Mammary epithelial cell (primary cell): ENCODE measurements at regions of chr12 and their contacts with region 1.

Region 1: DNA sequence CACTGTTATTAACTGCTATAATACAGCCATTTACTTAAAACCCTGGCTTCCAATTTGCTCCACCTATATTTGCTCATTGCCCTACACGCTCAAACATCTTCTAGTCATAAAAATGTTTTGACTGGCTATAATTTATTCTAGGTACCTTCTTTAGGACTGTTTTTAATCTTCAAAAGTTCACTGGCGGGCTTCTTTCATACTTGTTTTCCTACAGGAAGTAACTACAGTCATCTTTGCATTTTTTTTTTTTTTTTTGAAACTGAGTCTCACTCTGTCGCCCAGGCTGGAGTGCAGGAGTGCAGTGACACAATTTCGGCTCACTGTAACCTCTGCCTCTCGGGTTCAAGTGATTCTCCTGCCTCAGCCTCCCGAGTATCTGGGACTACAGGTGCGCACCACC is 32.5 kb downstream of the MPHOSPH9 start:
- DNase-seq: no peak
- H3K4me3 ChIP-seq: no peak overlapping the region
- H3K27ac ChIP-seq: no peak overlapping the region
- H3K4me1 ChIP-seq: no peaks in the 10 kb centered on the region
- H3K27me3 ChIP-seq: no peaks in the 10 kb centered on the region
- CTCF ChIP-seq: no peak

Region 2: GRCh38 chr12:122437656-122438121 is 762.7 kb before region 1 on chr12:
- CTCF ChIA-PET with region 1: no interaction called
- dilution Hi-C with region 1: no loop called
- in situ Hi-C with region 1: no loop called
- intact Hi-C with region 1: no loop called
- DNase-seq: peak; percentile 74
- H3K4me3 ChIP-seq: peak overlapping the region in 1 of 3 experiments; percentile 3
- H3K27ac ChIP-seq: no peak overlapping the region
- H3K4me1 ChIP-seq: peaks cover 4% of the 10 kb centered on the region
- H3K27me3 ChIP-seq: no peaks in the 10 kb centered on the region
- CTCF ChIP-seq: no peak

Region 3: DNA sequence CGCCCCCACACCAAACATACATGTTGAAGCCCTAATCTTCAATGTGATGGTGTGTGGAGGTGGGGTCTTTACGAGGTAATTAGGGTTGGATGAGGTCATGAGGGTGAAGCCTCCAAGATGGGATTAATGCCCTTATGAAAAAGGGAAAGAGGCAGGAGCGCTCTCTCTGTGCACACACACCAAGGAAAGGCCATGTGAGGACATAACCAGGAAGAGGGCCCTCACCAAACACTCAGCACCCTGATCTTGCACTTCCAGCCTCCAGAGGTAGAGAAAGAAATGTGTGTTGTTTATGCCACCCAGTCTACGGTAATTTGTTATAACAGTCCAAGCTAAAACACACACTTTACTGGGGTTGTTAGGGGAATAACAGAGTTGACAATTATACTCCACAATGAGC is 34.9 kb before region 1 on chr12:
- CTCF ChIA-PET with region 1: no interaction called
- dilution Hi-C with region 1: loop called (anchors 5 kb)
- in situ Hi-C with region 1: no loop called
- intact Hi-C with region 1: no loop called
- DNase-seq: no peak
- H3K4me3 ChIP-seq: no peak overlapping the region
- H3K27ac ChIP-seq: no peak overlapping the region
- H3K4me1 ChIP-seq: peaks cover 14% of the 10 kb centered on the region
- H3K27me3 ChIP-seq: no peaks in the 10 kb centered on the region
- CTCF ChIP-seq: no peak